Tibial artery (tissue), 4 donors: ENCODE measurements at regions of chr17 and their contacts with region 1.

Region 1: GRCh38 chr17:14997290-14997689 is 267.8 kb downstream of the PMP22 start:
- DNase-seq: no peak
- H3K4me3 ChIP-seq: no peak overlapping the region
- H3K27ac ChIP-seq: no peak overlapping the region
- H3K4me1 ChIP-seq: no peaks in the 10 kb centered on the region
- H3K27me3 ChIP-seq: no peaks in the 10 kb centered on the region
- CTCF ChIP-seq: no peak

Region 2: DNA sequence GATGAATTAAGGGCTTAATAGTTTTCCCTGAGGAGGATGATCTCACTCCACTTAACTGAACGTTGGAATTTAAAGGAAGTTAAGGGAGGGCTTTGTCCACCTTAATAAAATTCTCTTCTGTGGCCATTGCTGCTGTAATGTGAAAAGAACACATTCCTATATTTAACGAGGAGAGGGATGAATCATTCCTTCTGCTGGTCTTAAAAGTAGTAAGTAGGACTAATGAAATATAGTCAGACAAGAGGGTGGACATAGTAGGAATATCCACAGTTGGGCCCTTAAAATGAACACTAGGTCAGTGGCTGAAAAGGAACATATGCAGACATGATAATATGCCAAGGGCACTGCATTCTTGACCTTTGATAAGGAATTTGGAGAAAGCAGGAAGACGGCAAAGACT is 137.7 kb before region 1 on chr17:
- intact Hi-C with region 1: no loop called
- DNase-seq: no peak
- H3K4me3 ChIP-seq: no peak overlapping the region
- H3K27ac ChIP-seq: no peak overlapping the region
- H3K4me1 ChIP-seq: no peaks in the 10 kb centered on the region
- H3K27me3 ChIP-seq: no peaks in the 10 kb centered on the region
- CTCF ChIP-seq: no peak

Region 3: DNA sequence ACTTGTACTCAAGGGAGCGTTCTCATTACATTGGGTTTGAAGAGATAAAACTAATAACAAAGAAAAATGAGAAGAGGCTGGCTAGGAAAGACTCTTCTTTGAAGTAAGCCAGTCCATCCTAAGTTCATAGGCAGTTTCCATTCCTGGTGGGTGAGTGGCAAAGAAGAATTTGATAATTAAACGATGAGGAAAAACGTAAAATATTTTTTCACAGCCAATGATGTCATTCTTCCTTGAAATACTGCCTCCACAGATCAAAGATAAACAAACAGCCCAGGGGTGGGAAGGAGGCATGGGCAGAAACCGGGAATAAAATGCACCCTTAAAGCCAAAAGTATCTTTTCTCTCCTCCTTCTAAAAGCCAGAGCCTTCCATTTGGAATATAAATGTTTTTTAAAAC is 78.8 kb before region 1 on chr17:
- intact Hi-C with region 1: no loop called
- DNase-seq: no peak
- H3K4me3 ChIP-seq: no peak overlapping the region
- H3K27ac ChIP-seq: no peak overlapping the region
- H3K4me1 ChIP-seq: no peaks in the 10 kb centered on the region
- H3K27me3 ChIP-seq: no peaks in the 10 kb centered on the region
- CTCF ChIP-seq: no peak

Region 4: GRCh38 chr17:15051933-15052332 is 54.6 kb after region 1 on chr17:
- intact Hi-C with region 1: loop called (anchors 10 kb)
- DNase-seq: no peak
- H3K4me3 ChIP-seq: no peak overlapping the region
- H3K27ac ChIP-seq: no peak overlapping the region
- H3K4me1 ChIP-seq: no peaks in the 10 kb centered on the region
- H3K27me3 ChIP-seq: peaks cover 0 to 6% of the 10 kb centered on the region in 2 donors
- CTCF ChIP-seq: no peak